ENCODE measurements at regions of chr19 and their contacts with region 1.

Region 1: GRCh38 chr19:46600384-46601317 is 479 bp upstream of the CALM3 start:
- DNase-seq: peak; percentile 96 to 99 (median 98)
- ATAC-seq: peak; percentile 87
- H3K4me3 ChIP-seq: peak overlapping the region; percentile 100
- H3K4me3 Mint-ChIP-seq: peak overlapping the region; percentile 95
- H3K27ac ChIP-seq: peak overlapping the region; percentile 100
- H3K27ac Mint-ChIP-seq: peak overlapping the region; percentile 100
- H3K4me1 ChIP-seq: peaks cover 48% of the 10 kb centered on the region
- H3K4me1 Mint-ChIP-seq: peaks cover 51% of the 10 kb centered on the region
- H3K27me3 ChIP-seq: no peaks in the 10 kb centered on the region
- H3K27me3 Mint-ChIP-seq: no peaks in the 10 kb centered on the region
- CTCF ChIP-seq: no peak

Region 2: GRCh38 chr19:45692187-45693105 is 908.2 kb before region 1 on chr19 and contains the start of gene QPCTL:
- CTCF ChIA-PET with region 1: no interaction called
- POLR2A ChIA-PET with region 1: no interaction called
- intact Hi-C with region 1: no loop called
- DNase-seq: peak; percentile 92 to 99 (median 94)
- ATAC-seq: peak; percentile 87
- H3K4me3 ChIP-seq: peak within 1 kb of the TSS; percentile 85
- H3K4me3 Mint-ChIP-seq: peak within 1 kb of the TSS; percentile 96
- H3K27ac ChIP-seq: peak within 1 kb of the TSS; percentile 86 to 93
- H3K27ac Mint-ChIP-seq: peak within 1 kb of the TSS; percentile 95
- H3K4me1 ChIP-seq: peaks cover 39% of the 10 kb centered on the region
- H3K4me1 Mint-ChIP-seq: peaks cover 33% of the 10 kb centered on the region
- H3K27me3 ChIP-seq: no peaks in the 10 kb centered on the region
- H3K27me3 Mint-ChIP-seq: no peaks in the 10 kb centered on the region
- CTCF ChIP-seq: no peak
- total RNA-seq, gene QPCTL: 3.7 to 5.0 TPM

Region 3: GRCh38 chr19:45886427-45887199 is 714.0 kb before region 1 on chr19:
- CTCF ChIA-PET with region 1: no interaction called
- POLR2A ChIA-PET with region 1: no interaction called
- intact Hi-C with region 1: no loop called
- DNase-seq: peak; percentile 80 to 95 (median 85)
- ATAC-seq: peak; percentile 68
- H3K4me3 ChIP-seq: peak overlapping the region; percentile 78
- H3K4me3 Mint-ChIP-seq: peak overlapping the region; percentile 98
- H3K27ac ChIP-seq: peak overlapping the region; percentile 82 to 87
- H3K27ac Mint-ChIP-seq: peak overlapping the region; percentile 99
- H3K4me1 ChIP-seq: peaks cover 46% of the 10 kb centered on the region
- H3K4me1 Mint-ChIP-seq: peaks cover 31% of the 10 kb centered on the region
- H3K27me3 ChIP-seq: no peaks in the 10 kb centered on the region
- H3K27me3 Mint-ChIP-seq: no peaks in the 10 kb centered on the region
- CTCF ChIP-seq: no peak

Region 4: GRCh38 chr19:46192992-46193650 is 407.5 kb before region 1 on chr19:
- CTCF ChIA-PET with region 1: no interaction called
- POLR2A ChIA-PET with region 1: no interaction called
- intact Hi-C with region 1: no loop called
- DNase-seq: peak in 2 of 14 experiments; percentile 63 to 71
- ATAC-seq: no peak
- H3K4me3 ChIP-seq: no peak overlapping the region
- H3K4me3 Mint-ChIP-seq: no peak overlapping the region
- H3K27ac ChIP-seq: no peak overlapping the region
- H3K27ac Mint-ChIP-seq: no peak overlapping the region
- H3K4me1 ChIP-seq: no peaks in the 10 kb centered on the region
- H3K4me1 Mint-ChIP-seq: no peaks in the 10 kb centered on the region
- H3K27me3 ChIP-seq: peaks cover 20 to 31% of the 10 kb centered on the region in 2 experiments
- H3K27me3 Mint-ChIP-seq: peaks cover 73% of the 10 kb centered on the region
- CTCF ChIP-seq: no peak

Region 5: DNA sequence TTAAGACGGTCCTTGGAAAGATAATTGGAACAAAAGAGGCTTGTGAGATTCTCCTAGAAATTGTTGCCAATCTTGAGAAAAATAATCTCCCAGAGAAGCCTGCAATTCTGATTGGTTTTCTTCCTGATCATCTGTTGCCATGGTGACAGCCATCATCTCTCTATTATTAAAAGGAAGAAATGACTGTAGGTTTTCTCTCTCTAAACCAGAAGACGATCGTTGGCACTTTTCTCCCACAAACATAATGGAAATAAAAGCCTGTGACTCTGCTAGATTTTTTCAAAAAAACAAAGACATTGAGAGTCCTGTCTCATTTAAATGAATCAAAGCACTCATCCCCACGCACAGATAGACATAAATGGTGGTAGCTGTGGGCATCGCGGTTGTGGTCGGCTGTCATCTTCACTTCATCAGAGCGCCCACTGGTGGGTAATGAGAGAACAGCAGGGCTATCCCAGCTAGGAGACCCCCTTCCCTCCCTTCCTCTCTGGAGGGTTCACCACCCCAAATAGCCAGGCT is 21.2 kb before region 1 on chr19:
- CTCF ChIA-PET with region 1: interaction called, 5 read pairs
- POLR2A ChIA-PET with region 1: interaction called, 12 read pairs
- intact Hi-C with region 1: no loop called
- DNase-seq: peak in 10 of 14 experiments; percentile 5 to 53 (median 26)
- ATAC-seq: no peak
- H3K4me3 ChIP-seq: no peak overlapping the region
- H3K4me3 Mint-ChIP-seq: no peak overlapping the region
- H3K27ac ChIP-seq: no peak overlapping the region
- H3K27ac Mint-ChIP-seq: no peak overlapping the region
- H3K4me1 ChIP-seq: peaks cover 15% of the 10 kb centered on the region
- H3K4me1 Mint-ChIP-seq: peaks cover 24% of the 10 kb centered on the region
- H3K27me3 ChIP-seq: no peaks in the 10 kb centered on the region
- H3K27me3 Mint-ChIP-seq: no peaks in the 10 kb centered on the region
- CTCF ChIP-seq: no peak

Region 6: DNA sequence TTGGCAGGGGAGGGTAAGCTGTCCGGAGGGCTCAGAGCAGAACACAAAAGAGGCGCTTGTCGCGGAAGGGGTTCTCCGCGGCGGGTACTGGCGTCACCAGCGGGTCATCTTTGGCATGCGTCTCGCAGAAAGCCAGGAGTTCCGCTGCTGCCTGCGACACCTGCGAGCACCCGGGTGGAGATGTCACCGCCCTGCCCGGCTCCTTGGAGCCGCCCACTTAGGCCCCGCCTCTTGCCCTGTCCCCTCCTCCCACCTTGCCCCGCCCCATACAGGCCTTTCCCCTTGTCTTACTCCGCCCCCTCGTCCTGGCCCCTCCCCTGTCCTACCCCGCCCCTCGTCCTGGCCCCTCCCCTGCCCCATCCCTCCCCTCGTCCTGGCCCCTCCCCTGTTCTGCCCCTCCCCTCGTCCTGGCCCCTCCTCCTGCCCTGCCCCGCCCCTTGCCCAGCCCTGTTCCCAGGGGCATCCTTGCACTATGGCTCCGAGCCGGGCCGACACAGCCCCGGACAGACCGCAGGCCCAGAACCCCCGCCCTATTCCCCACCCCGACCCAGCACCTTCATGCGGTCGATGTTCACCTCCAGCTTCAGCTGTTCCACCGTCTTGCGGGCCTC is 33.5 kb after region 1 on chr19:
- CTCF ChIA-PET with region 1: interaction called, 10 read pairs
- POLR2A ChIA-PET with region 1: interaction called, 10 read pairs
- intact Hi-C with region 1: loop called in 1 of 2 experiments (anchors 1 kb)
- DNase-seq: peak; percentile 93 to 98 (median 97)
- ATAC-seq: peak; percentile 79
- H3K4me3 ChIP-seq: peak overlapping the region; percentile 57
- H3K4me3 Mint-ChIP-seq: peak overlapping the region; percentile 80
- H3K27ac ChIP-seq: peak overlapping the region; percentile 68 to 75
- H3K27ac Mint-ChIP-seq: peak overlapping the region; percentile 83
- H3K4me1 ChIP-seq: peaks cover 52% of the 10 kb centered on the region
- H3K4me1 Mint-ChIP-seq: peaks cover 19% of the 10 kb centered on the region
- H3K27me3 ChIP-seq: no peaks in the 10 kb centered on the region
- H3K27me3 Mint-ChIP-seq: no peaks in the 10 kb centered on the region
- CTCF ChIP-seq: no peak

Region 7: GRCh38 chr19:46654621-46655152 is 54.0 kb after region 1 on chr19:
- CTCF ChIA-PET with region 1: no interaction called
- POLR2A ChIA-PET with region 1: no interaction called
- intact Hi-C with region 1: no loop called
- DNase-seq: no peak
- ATAC-seq: no peak
- H3K4me3 ChIP-seq: no peak overlapping the region
- H3K4me3 Mint-ChIP-seq: no peak overlapping the region
- H3K27ac ChIP-seq: no peak overlapping the region
- H3K27ac Mint-ChIP-seq: no peak overlapping the region
- H3K4me1 ChIP-seq: peaks cover 9% of the 10 kb centered on the region
- H3K4me1 Mint-ChIP-seq: peaks cover 8% of the 10 kb centered on the region
- H3K27me3 ChIP-seq: peaks cover 28 to 32% of the 10 kb centered on the region in 2 experiments
- H3K27me3 Mint-ChIP-seq: peaks cover 61% of the 10 kb centered on the region
- CTCF ChIP-seq: no peak

Region 8: DNA sequence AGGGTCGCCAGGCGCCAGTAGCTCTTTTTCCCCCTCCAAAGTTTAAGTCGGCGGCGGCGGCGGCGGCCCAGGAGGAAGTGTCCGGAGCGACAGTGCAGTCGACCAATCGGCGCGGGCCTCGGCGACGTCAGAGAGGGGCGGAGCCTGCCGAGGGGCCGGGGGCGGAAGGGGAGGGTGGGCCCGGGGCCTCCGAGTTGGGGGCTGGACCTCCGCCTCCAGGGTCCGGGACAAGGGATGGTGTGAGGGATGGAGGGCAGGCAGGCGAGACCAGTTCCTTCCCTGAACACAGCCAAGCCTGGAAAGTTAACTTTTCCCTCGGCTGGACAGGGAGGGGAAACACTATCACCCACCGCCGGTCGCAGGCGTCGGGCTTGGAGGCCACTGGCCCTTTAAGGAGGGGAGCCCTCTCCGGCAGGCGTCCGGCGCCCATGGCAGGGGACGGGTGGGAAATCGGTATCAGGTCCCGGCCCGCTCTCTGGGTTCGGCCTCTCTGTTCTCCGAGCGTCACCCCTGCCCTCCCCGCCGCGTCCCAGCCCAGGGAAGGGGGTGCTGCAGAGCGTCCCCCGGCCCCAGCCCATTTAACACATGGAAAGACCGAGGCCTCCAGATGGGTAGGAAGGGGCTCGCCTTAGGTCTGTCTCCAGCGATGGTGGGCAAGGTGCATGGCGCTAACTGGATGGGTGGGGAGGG is 116.5 kb after region 1 on chr19 and contains the start of gene PRKD2:
- CTCF ChIA-PET with region 1: no interaction called
- POLR2A ChIA-PET with region 1: interaction called, 23 read pairs
- intact Hi-C with region 1: no loop called
- DNase-seq: peak; percentile 73 to 94 (median 84)
- ATAC-seq: peak; percentile 45
- H3K4me3 ChIP-seq: peak within 1 kb of the TSS; percentile 96
- H3K4me3 Mint-ChIP-seq: peak within 1 kb of the TSS; percentile 99
- H3K27ac ChIP-seq: peak within 1 kb of the TSS; percentile 86 to 91
- H3K27ac Mint-ChIP-seq: peak within 1 kb of the TSS; percentile 99
- H3K4me1 ChIP-seq: peaks cover 56% of the 10 kb centered on the region
- H3K4me1 Mint-ChIP-seq: peaks cover 43% of the 10 kb centered on the region
- H3K27me3 ChIP-seq: no peaks in the 10 kb centered on the region
- H3K27me3 Mint-ChIP-seq: no peaks in the 10 kb centered on the region
- CTCF ChIP-seq: no peak
- total RNA-seq, gene PRKD2: 105 to 113 TPM

Region 9: DNA sequence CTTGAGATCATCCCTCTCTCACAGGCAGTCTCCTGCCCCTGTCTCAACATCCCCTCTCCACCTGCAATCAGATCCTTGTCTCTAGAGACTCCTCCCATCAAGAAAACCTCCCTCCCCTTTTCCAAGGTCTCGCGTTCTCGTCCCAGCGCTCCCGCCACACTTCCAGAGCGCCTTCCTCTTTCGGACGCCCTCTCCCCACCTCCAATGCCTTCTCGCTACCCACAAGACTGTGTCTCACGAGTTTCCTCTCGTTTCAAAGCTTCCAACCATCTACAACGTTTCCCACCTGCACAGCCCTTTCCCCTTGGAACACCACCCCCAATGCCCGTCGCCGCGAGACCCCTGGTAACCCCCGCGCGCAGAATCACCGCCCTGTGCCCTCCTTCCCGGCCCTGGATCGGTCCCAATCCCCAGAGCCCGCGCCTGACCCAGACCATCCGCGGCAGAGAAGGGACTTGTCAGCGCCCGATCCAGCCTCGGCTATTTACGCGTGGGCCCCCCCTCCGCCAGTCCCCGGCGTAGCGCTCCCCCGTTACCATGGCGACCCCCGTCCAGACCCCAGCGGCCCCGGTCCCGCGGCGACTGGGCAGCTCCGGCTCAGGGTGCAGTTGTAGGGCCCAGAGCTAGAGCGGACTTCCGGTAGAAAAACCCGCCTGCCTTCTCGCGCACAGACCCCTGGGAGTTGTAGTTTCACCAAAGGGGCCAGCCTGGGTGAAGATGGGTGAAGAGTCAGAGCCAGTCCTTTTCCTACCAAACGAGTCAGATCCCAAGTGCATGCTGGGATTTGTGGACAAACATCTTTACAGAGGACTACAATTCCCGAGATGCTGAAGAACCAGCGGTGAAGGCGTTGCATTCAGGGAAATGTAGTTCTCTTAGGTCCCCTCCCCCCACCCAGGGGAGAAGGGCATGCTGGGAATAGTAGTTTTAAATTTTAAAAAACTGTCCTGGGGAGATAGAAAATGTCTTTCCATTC is 249.9 kb after region 1 on chr19 and contains the start of gene AP2S1:
- CTCF ChIA-PET with region 1: no interaction called
- POLR2A ChIA-PET with region 1: interaction called, 3 read pairs
- intact Hi-C with region 1: loop called in 1 of 2 experiments (anchors 5 kb)
- DNase-seq: peak; percentile 81 to 98 (median 90)
- ATAC-seq: peak; percentile 95
- H3K4me3 ChIP-seq: peak within 1 kb of the TSS; percentile 76
- H3K4me3 Mint-ChIP-seq: peak within 1 kb of the TSS; percentile 90
- H3K27ac ChIP-seq: peak within 1 kb of the TSS; percentile 39 to 71
- H3K27ac Mint-ChIP-seq: peak within 1 kb of the TSS; percentile 62
- H3K4me1 ChIP-seq: peaks cover 17% of the 10 kb centered on the region
- H3K4me1 Mint-ChIP-seq: peaks cover 33% of the 10 kb centered on the region
- H3K27me3 ChIP-seq: no peaks in the 10 kb centered on the region
- H3K27me3 Mint-ChIP-seq: no peaks in the 10 kb centered on the region
- CTCF ChIP-seq: no peak
- total RNA-seq, gene AP2S1: 24.5 to 26.9 TPM

Region 10: DNA sequence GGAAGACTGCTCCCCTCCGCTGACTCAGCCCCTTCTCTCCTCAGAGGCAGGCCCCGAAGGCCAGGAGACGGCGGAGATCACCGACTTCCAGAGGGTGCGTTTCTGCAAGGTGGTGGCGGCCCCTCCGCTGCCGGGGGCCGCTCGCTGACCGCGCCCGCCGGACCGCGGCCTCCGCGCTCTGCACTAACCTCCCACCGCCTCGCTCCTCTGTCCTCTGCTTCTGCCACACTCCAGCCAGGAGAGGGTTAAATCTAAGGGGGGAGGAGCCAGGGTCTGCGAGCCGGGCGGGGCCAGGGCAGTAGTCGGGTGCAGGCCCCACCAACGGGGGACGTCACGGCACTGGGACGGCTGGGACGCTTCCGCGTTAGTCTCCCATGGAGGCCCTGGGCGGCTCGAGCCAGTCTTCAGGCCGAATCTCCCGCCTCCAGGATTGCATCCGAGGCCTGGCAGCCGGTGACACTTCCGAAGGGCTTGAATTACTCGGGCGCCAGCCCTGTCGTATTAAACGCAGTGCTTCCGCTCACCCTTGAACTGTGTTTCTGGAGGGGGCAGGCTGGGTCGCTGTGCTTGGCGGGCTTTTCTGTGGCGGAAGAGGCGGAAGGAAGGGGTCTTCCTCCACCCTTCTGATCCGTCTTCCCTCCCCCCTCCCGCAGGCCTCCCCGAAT is 672.8 kb after region 1 on chr19:
- CTCF ChIA-PET with region 1: no interaction called
- POLR2A ChIA-PET with region 1: no interaction called
- intact Hi-C with region 1: loop called in 1 of 2 experiments (anchors 10 kb)
- DNase-seq: peak; percentile 82 to 95 (median 88)
- ATAC-seq: peak; percentile 63
- H3K4me3 ChIP-seq: peak overlapping the region; percentile 100
- H3K4me3 Mint-ChIP-seq: peak overlapping the region; percentile 100
- H3K27ac ChIP-seq: peak overlapping the region; percentile 92 to 99
- H3K27ac Mint-ChIP-seq: peak overlapping the region; percentile 99
- H3K4me1 ChIP-seq: peaks cover 24% of the 10 kb centered on the region
- H3K4me1 Mint-ChIP-seq: peaks cover 28% of the 10 kb centered on the region
- H3K27me3 ChIP-seq: no peaks in the 10 kb centered on the region
- H3K27me3 Mint-ChIP-seq: no peaks in the 10 kb centered on the region
- CTCF ChIP-seq: no peak

Measured in CD4-positive, alpha-beta T cell (primary cell).